Left ventricle myocardium inferior (tissue), 1 donor: ENCODE measurements at regions of chr16 and their contacts with region 1.

Region 1: DNA sequence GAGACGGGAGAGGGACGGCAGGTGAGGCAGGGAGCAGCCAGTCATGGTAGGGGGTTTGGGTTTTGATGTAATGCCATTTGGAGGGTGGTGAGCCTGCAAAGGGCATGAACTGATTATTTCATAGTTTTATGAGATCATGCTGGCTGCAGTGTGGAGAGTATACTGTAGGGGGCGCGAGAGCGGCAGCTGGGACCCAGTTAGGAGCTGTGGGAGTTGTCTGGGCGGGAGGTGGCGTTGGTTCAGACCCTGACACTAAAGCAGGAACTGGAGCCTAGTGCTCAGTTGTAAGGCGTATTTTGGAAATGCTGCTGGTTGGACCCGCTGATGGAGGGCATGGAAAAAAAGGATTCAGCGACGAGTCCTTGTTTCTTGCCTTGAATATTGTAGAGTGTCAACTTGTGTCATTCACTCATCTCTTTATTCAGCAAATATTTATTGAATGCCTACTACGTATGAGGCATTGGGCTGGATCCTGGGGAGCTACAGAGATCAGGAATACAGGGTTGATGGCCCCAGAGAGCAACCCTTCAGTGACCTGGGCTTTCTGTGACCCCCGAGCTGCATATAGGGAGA is 23.7 kb upstream of the KDM8 start:
- DNase-seq: peak; percentile 89
- H3K4me3 ChIP-seq: no peak overlapping the region
- H3K27ac ChIP-seq: no peak overlapping the region
- H3K4me1 ChIP-seq: no peaks in the 10 kb centered on the region
- H3K27me3 ChIP-seq: no peaks in the 10 kb centered on the region
- CTCF ChIP-seq: peak; percentile 96

Region 2: GRCh38 chr16:27374804-27375425 is 195.3 kb after region 1 on chr16:
- intact Hi-C with region 1: loop called (anchors 10 kb)
- DNase-seq: peak; percentile 41
- H3K4me3 ChIP-seq: no peak overlapping the region
- H3K27ac ChIP-seq: peak overlapping the region; percentile 29
- H3K4me1 ChIP-seq: peaks cover 6% of the 10 kb centered on the region
- H3K27me3 ChIP-seq: peaks cover 5% of the 10 kb centered on the region
- CTCF ChIP-seq: peak; percentile 52

Region 3: GRCh38 chr16:27455700-27456099 is 276.1 kb after region 1 on chr16:
- intact Hi-C with region 1: loop called (anchors 5 kb)
- DNase-seq: no peak
- H3K4me3 ChIP-seq: no peak overlapping the region
- H3K27ac ChIP-seq: no peak overlapping the region
- H3K4me1 ChIP-seq: peaks cover 29% of the 10 kb centered on the region
- H3K27me3 ChIP-seq: peaks cover 14% of the 10 kb centered on the region
- CTCF ChIP-seq: no peak